ENCODE measurements at regions of chr11 and their contacts with region 1.

Region 1: GRCh38 chr11:121655537-121656327 is 203.0 kb upstream of the SORL1-AS1 start:
- DNase-seq: peak; percentile 86 to 88
- ATAC-seq: peak; percentile 95 to 98 (median 96)
- H3K4me3 ChIP-seq: peak overlapping the region in 9 of 10 donors; percentile 22 to 60 (median 50)
- H3K27ac ChIP-seq: peak overlapping the region; percentile 82 to 96 (median 91)
- H3K4me1 ChIP-seq: peaks cover 0 to 28% (median 20%) of the 10 kb centered on the region in 9 donors
- H3K27me3 ChIP-seq: peaks cover 0 to 8% (median 0%) of the 10 kb centered on the region in 7 donors
- CTCF ChIP-seq: peak; percentile 77 to 91 (median 81)

Region 2: DNA sequence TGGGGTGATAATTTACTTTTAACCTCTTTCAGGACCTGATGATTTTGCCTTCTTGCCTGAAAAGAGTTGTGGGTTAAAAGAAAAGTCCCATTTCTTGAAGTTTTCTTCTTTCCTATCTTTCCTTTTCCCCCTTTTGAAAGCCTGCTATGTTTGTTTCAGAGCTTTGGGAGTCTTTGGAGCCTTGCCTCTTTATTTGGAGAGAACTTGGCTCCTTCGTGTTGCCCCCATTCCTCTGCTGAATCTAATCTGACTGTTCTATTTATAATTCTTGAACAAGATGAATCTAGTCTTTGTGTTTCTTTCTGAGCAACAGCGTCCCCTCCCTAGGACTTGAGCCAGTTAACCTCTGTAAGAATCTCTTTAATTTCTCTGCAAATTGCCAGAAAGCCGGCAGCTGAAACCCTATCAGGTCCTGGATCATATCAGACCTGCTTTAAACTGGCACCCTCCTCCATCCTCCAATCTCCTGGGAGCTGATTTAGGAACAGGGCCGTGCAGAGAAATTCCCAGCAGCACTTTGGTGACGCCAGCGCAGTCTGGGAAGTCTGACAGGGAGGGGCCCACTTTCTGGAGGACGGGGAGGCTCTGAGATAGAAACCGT is 86.1 kb after region 1 on chr11:
- intact Hi-C with region 1: loop called in 3 of 10 experiments (anchors 2 to 5 kb)
- DNase-seq: peak; percentile 74 to 81
- ATAC-seq: peak; percentile 87 to 98 (median 94)
- H3K4me3 ChIP-seq: peak overlapping the region in 3 of 10 donors; percentile 5 to 25 (median 16)
- H3K27ac ChIP-seq: peak overlapping the region; percentile 51 to 87 (median 81)
- H3K4me1 ChIP-seq: peaks cover 5 to 28% (median 19%) of the 10 kb centered on the region in 9 donors
- H3K27me3 ChIP-seq: no peaks in the 10 kb centered on the region
- CTCF ChIP-seq: peak in 2 of 9 donors; percentile 30 to 35

Region 3: GRCh38 chr11:122020902-122021301 is 365.2 kb after region 1 on chr11:
- intact Hi-C with region 1: loop called in 5 of 10 experiments (anchors 5 to 10 kb)
- DNase-seq: no peak
- ATAC-seq: no peak
- H3K4me3 ChIP-seq: no peak overlapping the region
- H3K27ac ChIP-seq: no peak overlapping the region
- H3K4me1 ChIP-seq: no peaks in the 10 kb centered on the region
- H3K27me3 ChIP-seq: no peaks in the 10 kb centered on the region
- CTCF ChIP-seq: peak in 8 of 9 donors; percentile 25 to 63 (median 57)

Region 4: GRCh38 chr11:122101625-122102291 is 446.0 kb after region 1 on chr11:
- intact Hi-C with region 1: loop called in 9 of 10 experiments (anchors 1 to 10 kb)
- DNase-seq: peak; percentile 44 to 80
- ATAC-seq: peak; percentile 85 to 92 (median 88)
- H3K4me3 ChIP-seq: peak overlapping the region; percentile 25 to 68 (median 56)
- H3K27ac ChIP-seq: peak overlapping the region; percentile 77 to 96 (median 90)
- H3K4me1 ChIP-seq: peaks cover 0 to 19% (median 11%) of the 10 kb centered on the region in 9 donors
- H3K27me3 ChIP-seq: peaks cover 0 to 58% (median 25%) of the 10 kb centered on the region in 7 donors
- CTCF ChIP-seq: peak; percentile 20 to 82 (median 56)

Region 5: GRCh38 chr11:122202951-122203456 is 547.3 kb after region 1 on chr11:
- intact Hi-C with region 1: loop called (anchors 1 to 5 kb)
- DNase-seq: peak; percentile 66 to 76
- ATAC-seq: peak; percentile 84 to 91 (median 88)
- H3K4me3 ChIP-seq: peak overlapping the region in 8 of 10 donors; percentile 24 to 47 (median 46)
- H3K27ac ChIP-seq: peak overlapping the region in 8 of 10 donors; percentile 2 to 67 (median 46)
- H3K4me1 ChIP-seq: peaks cover 0 to 56% (median 29%) of the 10 kb centered on the region in 9 donors
- H3K27me3 ChIP-seq: no peaks in the 10 kb centered on the region
- CTCF ChIP-seq: peak; percentile 89 to 99 (median 98)

Region 6: DNA sequence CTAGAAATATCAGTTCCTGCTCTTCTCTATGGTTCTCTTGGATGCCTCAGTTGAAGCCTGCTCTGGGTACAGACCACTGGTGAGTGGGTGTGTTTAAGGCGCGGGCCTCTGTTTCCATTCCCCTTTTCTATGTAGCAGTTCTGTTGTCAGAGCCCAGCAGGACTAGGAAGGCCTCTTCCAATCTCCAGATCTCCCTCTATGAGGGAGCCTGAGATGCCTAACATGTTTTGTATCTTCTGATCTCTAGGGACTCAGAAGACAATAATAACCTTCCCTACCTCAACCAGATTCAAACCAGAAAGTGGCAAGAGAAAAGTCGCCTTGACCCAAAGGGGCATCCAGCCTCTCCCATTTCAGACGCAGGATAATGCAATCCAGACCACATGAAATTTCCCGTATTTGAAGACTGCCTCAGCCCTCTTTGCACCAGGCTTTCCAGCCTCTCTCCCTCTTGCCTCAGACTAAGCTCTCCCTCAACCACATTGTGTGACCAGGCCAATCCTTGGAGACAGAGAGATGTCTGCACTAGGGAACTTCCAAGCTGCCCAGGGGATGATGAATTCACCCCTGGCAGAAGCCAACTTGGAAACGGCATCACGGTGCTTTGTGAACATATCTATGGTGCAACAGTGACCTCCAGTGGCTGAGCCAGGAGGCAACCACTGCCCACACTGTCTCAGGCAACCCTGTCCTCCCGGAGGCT is 849.7 kb after region 1 on chr11:
- intact Hi-C with region 1: loop called (anchors 1 to 10 kb)
- DNase-seq: peak; percentile 74 to 83
- ATAC-seq: peak; percentile 96 to 100 (median 97)
- H3K4me3 ChIP-seq: no peak overlapping the region
- H3K27ac ChIP-seq: no peak overlapping the region
- H3K4me1 ChIP-seq: peaks cover 0 to 8% (median 5%) of the 10 kb centered on the region in 9 donors
- H3K27me3 ChIP-seq: peaks cover 0 to 7% (median 0%) of the 10 kb centered on the region in 7 donors
- CTCF ChIP-seq: peak; percentile 64 to 95 (median 85)